ENCODE measurements at regions of chr17 and their contacts with region 1.

Region 1: GRCh38 chr17:76365256-76365903 is 11.7 kb upstream of the PRPSAP1 start:
- DNase-seq: no peak
- CTCF ChIP-seq: peak; percentile 53

Region 2: GRCh38 chr17:76032073-76032779 is 333.2 kb before region 1 on chr17:
- CTCF ChIA-PET with region 1: no interaction called
- POLR2A ChIA-PET with region 1: no interaction called
- DNase-seq: no peak
- CTCF ChIP-seq: no peak

Region 3: DNA sequence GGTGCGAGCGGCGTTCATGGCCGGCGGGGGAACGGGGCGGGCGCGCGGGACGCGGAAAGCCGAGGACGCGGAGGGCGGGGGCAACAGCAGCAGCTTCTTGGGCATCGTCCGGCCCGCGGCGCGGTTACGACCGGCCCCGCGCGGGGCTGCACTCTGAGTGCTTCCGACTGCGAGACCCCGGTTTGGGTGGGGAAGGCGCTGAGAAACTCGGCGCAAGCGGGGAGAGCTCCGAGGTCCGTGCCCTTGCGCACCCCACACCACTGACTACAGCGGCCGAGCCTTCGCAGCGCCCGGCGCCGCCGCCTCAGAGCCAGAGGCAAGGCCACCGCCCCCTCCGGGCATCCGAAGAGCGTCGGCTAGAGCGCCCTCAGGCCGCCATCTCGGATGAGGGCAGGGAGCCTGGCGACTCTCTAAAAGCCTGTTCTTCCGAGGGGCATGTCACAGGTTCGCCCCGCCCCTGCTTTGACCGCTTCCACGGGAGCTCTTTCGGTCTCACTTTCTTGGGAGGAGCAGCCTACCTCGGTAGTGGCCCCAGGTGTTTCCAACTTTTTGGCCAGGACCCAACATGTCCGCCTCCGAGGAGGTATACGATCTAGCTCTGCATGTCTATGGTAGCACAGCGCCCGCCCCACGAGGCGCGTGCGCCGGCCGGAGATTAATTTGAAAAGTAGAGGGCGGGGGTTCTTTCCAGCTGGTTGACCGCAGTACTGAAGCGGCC is 11.6 kb before region 1 on chr17 and contains the start of gene PRPSAP1:
- CTCF ChIA-PET with region 1: interaction called, 14 read pairs
- POLR2A ChIA-PET with region 1: no interaction called
- DNase-seq: peak; percentile 93
- CTCF ChIP-seq: no peak

Region 4: GRCh38 chr17:76983075-76983775 is 617.8 kb after region 1 on chr17:
- CTCF ChIA-PET with region 1: no interaction called
- POLR2A ChIA-PET with region 1: no interaction called
- DNase-seq: no peak
- CTCF ChIP-seq: no peak